HEK293 (cell line): ENCODE measurements at regions of chr4 and their contacts with region 1.

Region 1: GRCh38 chr4:69881173-69881773 is 21.3 kb upstream of the SULT1E1 start:
- H3K4me3 ChIP-seq: no peak overlapping the region
- H3K27ac ChIP-seq: no peak overlapping the region
- H3K4me1 ChIP-seq: no peaks in the 10 kb centered on the region
- CTCF ChIP-seq: no peak

Region 2: GRCh38 chr4:69689599-69689998 is 191.7 kb before region 1 on chr4:
- CTCF ChIA-PET with region 1: interaction called, 28 read pairs
- POLR2A ChIA-PET with region 1: no interaction called
- H3K4me3 ChIP-seq: no peak overlapping the region
- H3K27ac ChIP-seq: no peak overlapping the region
- H3K4me1 ChIP-seq: no peaks in the 10 kb centered on the region
- CTCF ChIP-seq: no peak

Region 3: GRCh38 chr4:69991016-69991415 is 109.7 kb after region 1 on chr4:
- CTCF ChIA-PET with region 1: no interaction called
- POLR2A ChIA-PET with region 1: no interaction called
- H3K4me3 ChIP-seq: no peak overlapping the region
- H3K27ac ChIP-seq: no peak overlapping the region
- H3K4me1 ChIP-seq: no peaks in the 10 kb centered on the region
- CTCF ChIP-seq: no peak

Region 4: GRCh38 chr4:70239884-70240591 is 358.8 kb after region 1 on chr4:
- CTCF ChIA-PET with region 1: no interaction called
- POLR2A ChIA-PET with region 1: no interaction called
- H3K4me3 ChIP-seq: no peak overlapping the region
- H3K27ac ChIP-seq: no peak overlapping the region
- H3K4me1 ChIP-seq: no peaks in the 10 kb centered on the region
- CTCF ChIP-seq: no peak